MCF 10A (cell line): ENCODE measurements at regions of chr4 and their contacts with region 1.

Region 1: GRCh38 chr4:24794916-24795665 is at the start of gene SOD3:
- DNase-seq: no peak
- H3K4me3 Mint-ChIP-seq: no peak within 1 kb of the TSS
- H3K27ac Mint-ChIP-seq: no peak within 1 kb of the TSS
- H3K4me1 Mint-ChIP-seq: no peaks in the 10 kb centered on the region
- H3K27me3 Mint-ChIP-seq: no peaks in the 10 kb centered on the region
- CTCF ChIP-seq: no peak
- total RNA-seq, gene SOD3: not detected in 2 replicates

Region 2: DNA sequence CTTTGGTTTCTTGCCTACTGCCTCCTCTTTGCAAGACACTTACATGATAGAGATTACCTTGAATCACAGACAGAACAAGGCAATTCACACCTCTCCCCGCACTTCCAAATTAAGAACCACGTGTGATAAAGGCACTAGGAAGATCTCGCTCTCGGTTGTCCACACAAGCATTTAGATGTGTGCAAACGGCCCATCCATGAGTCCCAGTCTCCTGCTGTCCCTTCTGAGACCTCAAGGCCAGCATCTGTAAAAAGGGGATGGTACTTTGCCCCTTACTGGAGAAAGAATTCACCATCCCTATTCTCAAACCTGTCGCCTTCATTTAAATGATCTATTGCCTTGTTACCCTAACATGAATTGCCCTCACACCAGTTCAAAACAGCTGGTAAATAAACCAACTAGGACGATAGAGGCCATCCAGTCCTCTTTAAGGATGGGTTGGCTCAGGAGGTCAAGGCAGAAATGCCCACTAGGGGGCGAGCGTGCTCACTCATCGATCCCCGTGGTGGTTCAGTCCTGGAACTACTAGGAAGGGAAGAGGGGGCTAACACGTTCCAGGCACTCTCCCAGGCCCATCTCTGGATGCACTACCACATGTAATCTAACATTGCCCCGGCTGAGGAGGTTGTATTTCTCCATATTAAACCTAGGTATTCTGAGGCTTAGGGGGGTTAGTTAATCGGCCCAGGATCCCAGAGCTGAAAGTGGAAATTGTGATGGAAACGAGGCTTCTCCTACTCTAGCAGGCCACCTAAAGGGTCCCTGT is 306.5 kb before region 1 on chr4:
- CTCF ChIA-PET with region 1: interaction called, 10 read pairs
- POLR2A ChIA-PET with region 1: no interaction called
- intact Hi-C with region 1: loop called (anchors 1 kb)
- DNase-seq: peak; percentile 65
- H3K4me3 Mint-ChIP-seq: no peak overlapping the region
- H3K27ac Mint-ChIP-seq: no peak overlapping the region
- H3K4me1 Mint-ChIP-seq: no peaks in the 10 kb centered on the region
- H3K27me3 Mint-ChIP-seq: peaks cover 13% of the 10 kb centered on the region
- CTCF ChIP-seq: peak; percentile 85

Region 3: GRCh38 chr4:24551492-24552289 is 243.4 kb before region 1 on chr4:
- CTCF ChIA-PET with region 1: interaction called, 14 read pairs
- POLR2A ChIA-PET with region 1: no interaction called
- intact Hi-C with region 1: no loop called
- DNase-seq: no peak
- H3K4me3 Mint-ChIP-seq: no peak overlapping the region
- H3K27ac Mint-ChIP-seq: no peak overlapping the region
- H3K4me1 Mint-ChIP-seq: peaks cover 18% of the 10 kb centered on the region
- H3K27me3 Mint-ChIP-seq: no peaks in the 10 kb centered on the region
- CTCF ChIP-seq: peak; percentile 43

Region 4: DNA sequence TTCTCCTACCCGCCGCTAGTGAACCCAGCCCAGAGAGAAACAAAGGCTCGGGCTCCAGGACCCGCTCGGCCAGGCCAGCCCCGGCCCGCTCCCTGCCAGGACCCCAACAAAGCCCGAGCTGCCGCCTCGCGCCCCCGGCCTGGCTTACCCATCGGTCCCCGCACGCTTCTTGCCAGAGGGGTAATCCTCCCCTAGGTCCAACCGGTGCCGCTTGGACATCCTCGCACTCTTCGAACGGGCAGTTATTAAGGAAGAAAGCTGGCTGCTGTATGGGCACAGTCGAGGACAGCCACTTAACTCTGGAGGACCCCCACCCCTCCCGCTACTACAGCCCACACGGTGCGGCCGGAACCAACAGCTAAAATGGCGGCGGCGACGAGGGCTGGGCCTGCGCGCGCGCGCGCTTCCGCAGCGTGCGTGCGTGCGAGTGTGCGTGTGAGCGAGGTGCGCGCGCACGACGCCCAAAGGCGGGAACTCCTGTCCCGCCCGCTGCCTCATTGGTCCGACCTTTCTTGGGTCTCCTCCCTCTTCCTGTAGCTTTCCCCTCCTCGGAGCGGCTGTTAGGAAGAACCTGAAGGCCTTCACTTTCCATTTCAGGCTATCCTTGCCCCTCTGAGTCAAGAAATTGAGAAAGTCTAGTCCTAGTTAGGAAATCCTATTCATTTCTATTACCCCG is 210.8 kb before region 1 on chr4 and contains the start of gene DHX15:
- CTCF ChIA-PET with region 1: no interaction called
- POLR2A ChIA-PET with region 1: interaction called, 3 read pairs
- intact Hi-C with region 1: loop called (anchors 1 kb)
- DNase-seq: peak; percentile 98
- H3K4me3 Mint-ChIP-seq: peak within 1 kb of the TSS; percentile 85
- H3K27ac Mint-ChIP-seq: peak within 1 kb of the TSS; percentile 94
- H3K4me1 Mint-ChIP-seq: peaks cover 15% of the 10 kb centered on the region
- H3K27me3 Mint-ChIP-seq: no peaks in the 10 kb centered on the region
- CTCF ChIP-seq: no peak
- total RNA-seq, gene DHX15: 114 and 125 TPM in 2 replicates

Region 5: GRCh38 chr4:24675721-24676389 is 119.2 kb before region 1 on chr4:
- CTCF ChIA-PET with region 1: no interaction called
- POLR2A ChIA-PET with region 1: no interaction called
- intact Hi-C with region 1: no loop called
- DNase-seq: no peak
- H3K4me3 Mint-ChIP-seq: no peak overlapping the region
- H3K27ac Mint-ChIP-seq: no peak overlapping the region
- H3K4me1 Mint-ChIP-seq: no peaks in the 10 kb centered on the region
- H3K27me3 Mint-ChIP-seq: peaks cover 12% of the 10 kb centered on the region
- CTCF ChIP-seq: no peak

Region 6: DNA sequence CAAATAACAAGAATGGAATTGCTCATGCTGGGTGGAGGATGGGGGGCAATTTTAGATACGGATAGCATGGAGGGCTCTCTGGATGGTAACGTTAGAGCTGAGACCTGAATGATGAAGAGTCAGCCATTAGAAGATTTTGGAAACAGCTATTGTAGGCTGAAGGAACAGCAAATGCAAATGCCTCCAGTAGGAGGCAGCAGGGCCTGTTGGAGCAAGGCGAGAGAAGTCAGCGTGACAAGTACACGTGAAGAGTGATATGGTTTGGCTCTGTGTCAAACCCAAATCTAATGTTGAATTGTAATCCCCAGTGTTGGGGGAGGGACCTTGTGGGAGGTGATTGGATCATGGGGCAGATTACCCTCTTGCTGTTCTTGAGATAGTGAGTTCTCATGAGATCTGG is 59.0 kb before region 1 on chr4:
- CTCF ChIA-PET with region 1: interaction called, 9 read pairs
- POLR2A ChIA-PET with region 1: no interaction called
- intact Hi-C with region 1: loop called (anchors 1 kb)
- DNase-seq: peak; percentile 56
- H3K4me3 Mint-ChIP-seq: no peak overlapping the region
- H3K27ac Mint-ChIP-seq: no peak overlapping the region
- H3K4me1 Mint-ChIP-seq: peaks cover 4% of the 10 kb centered on the region
- H3K27me3 Mint-ChIP-seq: no peaks in the 10 kb centered on the region
- CTCF ChIP-seq: peak; percentile 58

Region 7: DNA sequence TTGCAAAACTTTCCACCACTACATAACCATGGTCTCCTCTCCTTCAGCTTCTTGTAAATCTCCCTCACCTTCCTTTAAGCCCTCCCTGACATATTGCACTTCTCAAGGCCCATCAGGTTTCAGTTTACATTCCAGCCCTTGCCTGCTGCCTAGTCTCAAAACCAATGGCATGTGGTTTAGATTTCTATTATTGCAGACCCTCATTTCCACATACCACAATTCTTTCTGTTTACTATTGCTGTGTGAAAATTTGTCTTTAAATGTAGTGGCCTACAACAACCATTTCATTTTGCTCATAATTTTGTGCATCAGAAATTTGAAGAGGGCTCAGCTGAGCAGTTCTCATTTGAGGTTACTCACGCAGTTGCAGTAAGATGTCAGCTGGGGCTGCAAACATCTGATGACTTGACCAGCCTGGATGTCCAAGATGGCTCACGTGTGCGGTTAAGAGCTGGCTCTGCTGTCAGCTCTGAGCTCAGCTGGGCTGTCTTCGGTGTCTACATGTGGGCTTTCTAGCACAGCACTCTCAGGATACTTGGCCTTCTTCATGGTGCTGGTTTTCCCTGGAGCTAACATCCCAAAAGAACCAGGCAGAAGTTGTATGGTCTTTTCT is 29.6 kb before region 1 on chr4:
- CTCF ChIA-PET with region 1: interaction called, 10 read pairs
- POLR2A ChIA-PET with region 1: no interaction called
- intact Hi-C with region 1: no loop called
- DNase-seq: no peak
- H3K4me3 Mint-ChIP-seq: no peak overlapping the region
- H3K27ac Mint-ChIP-seq: peak overlapping the region; percentile 47
- H3K4me1 Mint-ChIP-seq: peaks cover 20% of the 10 kb centered on the region
- H3K27me3 Mint-ChIP-seq: no peaks in the 10 kb centered on the region
- CTCF ChIP-seq: no peak